HEK293 (cell line): ENCODE measurements at regions of chr2 and their contacts with region 1.

Region 1: GRCh38 chr2:28594289-28595108 is 98.6 kb downstream of the PLB1 start:
- H3K4me3 ChIP-seq: no peak overlapping the region
- H3K27ac ChIP-seq: no peak overlapping the region
- H3K4me1 ChIP-seq: no peaks in the 10 kb centered on the region
- CTCF ChIP-seq: peak; percentile 78

Region 2: GRCh38 chr2:28583899-28584553 is 10.5 kb before region 1 on chr2:
- CTCF ChIA-PET with region 1: interaction called, 21 read pairs
- POLR2A ChIA-PET with region 1: no interaction called
- H3K4me3 ChIP-seq: no peak overlapping the region
- H3K27ac ChIP-seq: peak overlapping the region; percentile 40
- H3K4me1 ChIP-seq: peaks cover 3% of the 10 kb centered on the region; the same call in 1 of the 2 replicates
- CTCF ChIP-seq: no peak

Region 3: GRCh38 chr2:28621172-28622100 is 26.9 kb after region 1 on chr2:
- CTCF ChIA-PET with region 1: interaction called, 41 read pairs
- POLR2A ChIA-PET with region 1: interaction called, 3 read pairs
- H3K4me3 ChIP-seq: no peak overlapping the region
- H3K27ac ChIP-seq: no peak overlapping the region
- H3K4me1 ChIP-seq: no peaks in the 10 kb centered on the region
- CTCF ChIP-seq: peak; percentile 46

Region 4: DNA sequence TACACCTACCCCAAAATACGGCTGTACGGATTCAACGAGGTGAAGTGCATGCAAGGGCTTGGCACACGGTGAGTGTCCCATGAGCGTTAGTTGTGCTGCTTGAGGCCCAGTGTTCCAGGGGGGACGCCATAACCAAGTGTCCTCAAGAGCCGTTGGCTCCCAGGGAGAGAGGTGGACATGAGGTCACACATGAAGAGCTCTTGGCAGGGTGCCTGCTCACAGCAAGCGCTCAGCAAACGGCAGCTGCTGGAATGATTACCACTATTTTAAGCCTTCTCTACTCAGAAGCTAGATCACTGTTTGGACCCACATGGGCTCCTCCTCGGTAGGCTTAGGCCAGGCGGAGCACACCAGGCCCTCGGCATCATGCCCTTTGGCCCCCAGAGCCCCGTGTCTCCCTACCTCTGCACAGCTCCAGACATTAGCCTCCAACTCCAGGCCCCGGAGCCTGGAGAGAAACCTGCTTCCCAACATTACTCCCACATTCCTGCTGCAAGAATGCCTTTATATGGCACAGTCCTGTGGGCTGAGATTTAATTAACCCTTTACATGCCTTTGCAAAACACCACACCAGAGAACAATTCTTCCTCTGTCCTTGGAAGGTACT is 88.7 kb after region 1 on chr2:
- CTCF ChIA-PET with region 1: interaction called, 12 read pairs
- POLR2A ChIA-PET with region 1: no interaction called
- H3K4me3 ChIP-seq: no peak overlapping the region
- H3K27ac ChIP-seq: no peak overlapping the region
- H3K4me1 ChIP-seq: peaks cover 7% of the 10 kb centered on the region
- CTCF ChIP-seq: no peak

Region 5: DNA sequence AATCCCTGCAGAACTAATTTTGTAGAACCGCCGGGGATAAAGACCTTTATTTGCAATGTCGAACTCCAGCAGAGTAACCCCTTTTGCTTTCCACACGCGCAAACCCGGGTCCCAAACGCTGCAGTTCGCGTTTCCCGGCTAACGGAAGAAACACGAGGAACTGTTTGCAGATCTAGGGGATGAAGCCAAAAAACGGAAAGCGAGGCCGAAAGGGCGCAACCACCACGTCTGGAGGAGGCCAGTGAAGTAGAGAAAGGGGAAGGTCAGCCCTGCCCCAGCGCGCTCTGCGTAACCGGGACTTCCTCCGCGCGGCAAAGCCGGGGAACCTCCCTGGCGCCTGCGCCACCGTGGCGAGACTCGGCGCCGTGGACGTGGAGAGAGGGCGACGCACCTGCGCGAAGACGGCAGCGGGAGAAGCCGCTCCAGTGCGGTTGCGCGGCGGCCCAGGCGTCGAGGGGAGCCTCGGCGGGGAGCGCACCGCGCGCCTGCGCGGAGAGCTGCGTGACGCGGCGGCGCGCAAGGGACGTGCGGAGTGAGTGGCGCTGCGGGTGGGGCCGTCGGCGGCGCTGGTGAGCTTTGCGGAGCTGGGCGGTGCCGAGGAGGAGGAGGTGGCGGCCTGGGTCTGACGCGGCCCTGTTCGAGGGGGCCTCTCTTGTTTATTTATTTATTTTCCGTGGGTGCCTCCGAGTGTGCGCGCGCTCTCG is 156.9 kb after region 1 on chr2 and contains the start of gene PPP1CB:
- CTCF ChIA-PET with region 1: interaction called, 32 read pairs
- POLR2A ChIA-PET with region 1: interaction called, 23 read pairs
- H3K4me3 ChIP-seq: peak within 1 kb of the TSS; percentile 97
- H3K27ac ChIP-seq: peak within 1 kb of the TSS; percentile 98
- H3K4me1 ChIP-seq: peaks cover 15% of the 10 kb centered on the region
- CTCF ChIP-seq: no peak; the same call in 1 of the 2 replicates